Ascending aorta (tissue), 2 donors: ENCODE measurements at regions of chr4 and their contacts with region 1.

Region 1: GRCh38 chr4:128454281-128455075 is 166.9 kb upstream of the PGRMC2 start:
- DNase-seq: peak; percentile 59 to 89
- H3K4me3 ChIP-seq: no peak overlapping the region
- H3K27ac ChIP-seq: no peak overlapping the region
- H3K4me1 ChIP-seq: peaks cover 0 to 10% of the 10 kb centered on the region in 2 donors
- H3K27me3 ChIP-seq: no peaks in the 10 kb centered on the region
- CTCF ChIP-seq: peak; percentile 68 to 85 (median 80)

Region 2: DNA sequence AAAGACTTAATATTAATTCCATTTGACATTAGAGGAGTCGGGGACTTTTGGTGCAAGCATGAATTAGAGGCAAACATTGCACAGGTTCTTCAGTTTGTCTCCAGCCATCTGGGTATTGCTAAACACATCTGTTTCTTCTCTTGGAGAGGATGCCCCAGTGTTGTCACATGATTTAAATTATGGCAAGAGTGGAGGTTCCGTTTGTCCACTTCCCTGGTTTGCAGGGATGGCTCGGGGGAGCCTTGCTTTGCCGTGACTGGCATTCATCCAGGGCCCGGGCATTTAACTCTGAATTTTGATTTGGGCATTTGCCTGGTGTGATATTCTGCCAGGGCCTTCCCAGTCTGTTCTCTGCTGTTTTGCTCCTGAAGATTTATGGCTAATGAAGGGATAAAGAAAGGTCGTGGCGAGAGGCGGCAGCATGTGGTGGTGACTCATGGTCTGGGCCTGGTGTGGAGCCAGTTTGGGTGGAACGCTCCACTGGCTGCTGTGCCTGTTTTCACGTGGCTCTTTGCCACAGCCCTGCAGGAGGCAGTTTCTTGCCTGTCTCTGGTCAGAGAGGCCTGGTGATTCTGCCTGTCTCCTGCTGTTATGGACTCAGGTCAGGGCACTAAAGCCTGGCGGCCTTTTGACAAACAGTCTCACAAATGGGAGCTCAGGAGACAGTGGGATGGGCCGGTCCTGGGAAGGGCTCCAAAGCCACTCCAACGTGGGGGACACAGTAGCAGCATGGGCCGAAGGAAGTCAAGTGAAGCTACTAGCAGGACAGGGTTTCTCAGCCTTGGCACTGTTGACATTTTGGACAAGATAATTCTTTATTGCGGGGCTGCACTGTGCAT is 67.5 kb before region 1 on chr4:
- intact Hi-C with region 1: loop called (anchors 5 kb)
- DNase-seq: peak; percentile 63 to 95
- H3K4me3 ChIP-seq: peak overlapping the region in 1 of 2 donors; percentile 38
- H3K27ac ChIP-seq: peak overlapping the region; percentile 58 to 69
- H3K4me1 ChIP-seq: peaks cover 0 to 21% of the 10 kb centered on the region in 2 donors
- H3K27me3 ChIP-seq: no peaks in the 10 kb centered on the region
- CTCF ChIP-seq: no peak

Region 3: DNA sequence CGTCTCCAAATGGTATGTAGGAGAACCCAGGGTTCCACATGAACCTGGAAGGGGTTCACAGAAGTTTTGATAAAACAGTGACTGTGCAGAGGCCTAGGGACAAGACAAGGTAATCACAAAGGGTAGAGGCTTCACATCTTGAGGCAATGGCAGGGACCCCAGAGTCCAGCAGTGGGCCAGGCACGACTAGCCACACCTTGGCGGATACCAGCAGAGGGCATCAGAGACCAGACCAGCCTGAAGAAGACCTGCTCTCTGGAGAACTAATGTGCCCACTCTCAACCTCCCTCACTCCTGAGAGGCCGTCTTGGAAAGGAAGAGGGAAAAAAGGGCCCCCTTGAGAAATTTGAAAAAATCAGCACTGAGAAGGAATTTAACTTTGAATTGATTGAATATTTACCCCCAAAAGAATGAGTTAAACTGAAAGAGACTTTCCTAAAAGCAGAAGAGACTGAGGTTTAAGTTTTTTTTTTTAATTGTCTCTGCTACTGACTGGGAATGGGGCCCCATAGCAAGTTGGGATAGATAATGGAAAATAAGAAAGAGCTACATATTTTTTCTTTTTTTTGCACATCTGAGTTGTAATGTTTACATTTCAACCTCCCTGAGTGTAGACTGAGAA is 111.2 kb after region 1 on chr4:
- intact Hi-C with region 1: loop called (anchors 2 kb)
- DNase-seq: no peak
- H3K4me3 ChIP-seq: no peak overlapping the region
- H3K27ac ChIP-seq: no peak overlapping the region
- H3K4me1 ChIP-seq: no peaks in the 10 kb centered on the region
- H3K27me3 ChIP-seq: no peaks in the 10 kb centered on the region
- CTCF ChIP-seq: peak in 2 of 3 experiments; percentile 22 to 40

Region 4: DNA sequence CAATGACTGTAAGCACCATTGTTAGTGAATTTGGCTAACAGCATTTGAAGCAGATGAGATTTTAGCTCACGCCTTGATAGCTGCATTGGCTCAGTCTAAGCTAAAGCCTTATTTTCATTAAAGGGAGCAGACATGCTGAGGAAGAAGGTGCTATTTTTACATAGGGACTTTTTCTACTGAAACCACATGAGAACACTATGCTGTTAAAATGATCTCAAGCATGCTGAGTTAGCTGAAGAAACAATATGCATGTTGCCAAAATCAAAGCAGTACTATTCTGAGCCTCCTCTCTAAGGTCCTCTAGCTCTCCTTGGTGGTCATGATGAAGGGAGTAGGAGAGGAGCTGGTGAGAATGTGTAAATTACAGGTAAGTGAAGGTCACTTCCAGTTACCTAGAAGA is 220.6 kb after region 1 on chr4:
- intact Hi-C with region 1: loop called (anchors 10 kb)
- DNase-seq: no peak
- H3K4me3 ChIP-seq: no peak overlapping the region
- H3K27ac ChIP-seq: peak overlapping the region in 1 of 2 donors; percentile 34
- H3K4me1 ChIP-seq: peaks cover 0 to 12% of the 10 kb centered on the region in 2 donors
- H3K27me3 ChIP-seq: no peaks in the 10 kb centered on the region
- CTCF ChIP-seq: peak in 2 of 3 experiments; percentile 12 to 36

Region 5: DNA sequence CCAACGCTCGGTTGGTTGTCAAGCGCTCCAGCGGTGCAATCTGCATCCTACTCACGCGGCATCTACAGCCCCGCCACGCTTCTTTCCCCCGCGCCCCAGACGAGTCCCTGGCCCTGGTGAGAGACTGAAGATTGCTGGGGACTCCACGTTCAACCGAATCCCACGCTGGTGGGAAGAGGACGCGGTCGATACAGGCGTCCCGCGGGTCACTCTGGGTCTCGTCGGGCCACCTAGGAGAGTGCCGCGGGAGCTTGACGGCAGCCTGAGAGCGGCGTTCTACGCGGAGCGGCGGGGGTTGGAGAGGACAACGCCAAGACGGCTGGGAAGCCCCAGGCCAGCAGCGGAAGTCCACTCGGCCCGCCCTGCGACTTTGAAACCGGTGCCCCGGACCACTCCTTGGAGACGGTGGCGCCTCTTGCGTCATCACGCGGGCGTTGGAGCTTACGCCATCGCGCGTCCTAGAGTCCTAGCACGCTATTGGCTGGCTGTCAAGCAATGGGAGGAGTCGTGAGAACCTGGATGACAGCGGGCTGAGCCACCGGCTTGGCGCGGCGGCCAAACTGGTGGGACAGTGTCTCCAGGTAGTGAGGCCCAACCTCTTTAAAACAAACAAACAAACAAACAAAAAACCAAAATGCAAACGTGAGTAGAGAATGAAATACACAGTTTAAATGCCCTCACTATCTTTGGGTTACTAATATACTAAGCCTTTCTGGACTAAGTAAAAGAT is 638.9 kb after region 1 on chr4 and contains the start of gene SCLT1:
- intact Hi-C with region 1: loop called (anchors 10 kb)
- DNase-seq: peak; percentile 92 to 99
- H3K4me3 ChIP-seq: peak within 1 kb of the TSS; percentile 74 to 75
- H3K27ac ChIP-seq: peak within 1 kb of the TSS; percentile 91 to 92
- H3K4me1 ChIP-seq: peaks cover 0 to 14% of the 10 kb centered on the region in 2 donors
- H3K27me3 ChIP-seq: no peaks in the 10 kb centered on the region
- CTCF ChIP-seq: no peak
- total RNA-seq, gene SCLT1: 7.0 TPM